Esophagus muscularis mucosa (tissue), 4 donors: ENCODE measurements at regions of chr9 and their contacts with region 1.

Region 1: GRCh38 chr9:87324613-87325194 is 173.0 kb upstream of the DAPK1 start:
- DNase-seq: peak; percentile 2
- H3K4me3 ChIP-seq: no peak overlapping the region
- H3K27ac ChIP-seq: no peak overlapping the region
- H3K4me1 ChIP-seq: peaks cover 0 to 5% (median 0%) of the 10 kb centered on the region in 4 donors
- H3K27me3 ChIP-seq: no peaks in the 10 kb centered on the region
- CTCF ChIP-seq: peak; percentile 79 to 85 (median 82)
- EP300 ChIP-seq: no peak
- POLR2A ChIP-seq: no peak

Region 2: DNA sequence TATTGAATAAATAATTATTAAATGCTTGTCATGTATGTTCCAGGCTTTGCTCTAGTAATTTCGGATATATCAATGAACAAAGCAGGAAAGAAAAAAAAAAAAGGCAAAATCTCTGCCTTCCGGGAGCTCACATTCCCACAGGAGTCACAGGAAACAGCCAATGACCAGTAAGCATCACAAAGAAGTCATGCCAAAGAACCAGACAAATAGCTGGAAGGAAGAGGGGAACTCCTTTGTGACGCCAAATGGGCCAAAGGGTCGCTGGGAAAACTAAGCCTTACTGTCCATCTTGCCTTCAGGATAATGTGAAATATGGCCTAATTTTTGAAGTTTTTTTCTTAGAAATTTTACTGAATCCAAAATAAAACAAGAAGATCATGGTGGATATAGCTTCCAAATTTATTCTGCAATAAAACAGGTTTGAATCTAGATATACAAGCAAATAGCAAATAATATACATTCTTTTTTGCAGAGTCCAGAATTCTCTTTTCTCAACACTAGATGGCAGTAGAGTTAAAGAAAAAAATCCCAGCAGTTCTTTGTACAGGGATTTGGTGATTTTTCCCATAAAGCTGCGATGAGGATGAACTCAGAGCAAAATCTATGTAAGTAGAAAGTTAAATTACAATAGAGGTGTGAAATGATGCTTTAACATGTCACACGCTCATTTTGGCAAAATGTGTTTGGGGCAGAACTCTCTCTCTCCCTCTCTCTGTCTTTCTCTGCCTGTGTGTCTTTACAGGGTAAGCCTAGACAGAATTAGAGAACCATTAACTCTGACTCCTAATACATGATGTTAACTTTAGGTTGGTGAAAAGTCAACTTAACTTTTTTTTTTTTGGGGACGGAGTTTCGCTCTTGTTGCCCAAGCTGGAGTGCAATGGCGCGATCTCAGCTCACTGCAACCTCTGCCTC is 910.5 kb before region 1 on chr9:
- intact Hi-C with region 1: loop called (anchors 5 kb)
- DNase-seq: no peak
- H3K4me3 ChIP-seq: no peak overlapping the region
- H3K27ac ChIP-seq: no peak overlapping the region
- H3K4me1 ChIP-seq: peaks cover 3 to 8% (median 7%) of the 10 kb centered on the region in 4 donors
- H3K27me3 ChIP-seq: no peaks in the 10 kb centered on the region
- CTCF ChIP-seq: peak; percentile 68 to 76 (median 75)
- EP300 ChIP-seq: no peak
- POLR2A ChIP-seq: no peak

Region 3: GRCh38 chr9:86434039-86434726 is 890.5 kb before region 1 on chr9:
- intact Hi-C with region 1: loop called (anchors 2 kb)
- DNase-seq: no peak
- H3K4me3 ChIP-seq: no peak overlapping the region
- H3K27ac ChIP-seq: peak overlapping the region; percentile 20 to 36 (median 26)
- H3K4me1 ChIP-seq: peaks cover 0 to 6% (median 2%) of the 10 kb centered on the region in 4 donors
- H3K27me3 ChIP-seq: no peaks in the 10 kb centered on the region
- CTCF ChIP-seq: peak; percentile 70 to 83 (median 71)
- EP300 ChIP-seq: no peak
- POLR2A ChIP-seq: no peak

Region 4: DNA sequence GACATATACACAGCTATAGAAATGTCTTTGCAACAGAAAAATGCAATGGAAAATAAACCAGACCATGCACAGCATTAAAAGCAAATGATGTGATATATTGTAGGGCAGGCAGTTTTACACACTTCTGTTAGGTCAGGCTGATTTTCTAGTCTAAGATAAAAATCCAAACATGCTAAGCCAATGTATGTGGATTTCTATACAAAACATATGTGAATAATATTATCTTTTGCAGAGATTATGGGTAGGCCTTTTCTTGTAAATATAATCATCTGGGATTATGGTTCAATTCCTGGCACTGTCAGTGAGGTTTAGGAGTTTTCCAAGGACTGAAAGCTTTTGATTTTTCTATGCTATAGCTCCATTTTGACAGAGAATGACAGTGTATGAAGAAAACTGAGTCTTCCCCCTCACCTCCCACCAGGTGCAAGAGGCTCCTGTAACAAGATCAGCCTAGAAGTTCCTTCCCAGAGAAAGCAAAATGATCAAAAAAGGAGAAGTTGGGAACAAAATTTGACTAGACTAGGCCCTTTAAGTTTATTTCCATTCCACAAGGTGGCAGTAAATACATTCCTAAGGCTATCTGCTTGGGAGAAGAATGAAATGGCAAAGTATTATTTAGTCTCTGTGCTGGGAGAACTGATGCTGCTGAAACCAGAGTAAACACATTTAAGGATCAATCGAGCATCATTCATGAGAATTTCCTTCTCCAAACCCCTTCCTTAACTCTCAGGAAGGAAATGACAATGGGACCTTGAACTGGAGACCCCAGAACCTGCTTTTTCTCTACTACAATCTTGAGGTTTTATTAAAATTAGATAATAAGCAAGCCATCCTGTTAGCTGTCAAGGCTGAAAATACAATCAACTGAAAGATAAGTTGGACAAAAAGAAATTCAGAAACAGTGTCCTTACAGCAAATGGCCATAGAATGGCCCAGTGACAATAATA is 837.5 kb before region 1 on chr9:
- intact Hi-C with region 1: loop called (anchors 2 kb)
- DNase-seq: no peak
- H3K4me3 ChIP-seq: no peak overlapping the region
- H3K27ac ChIP-seq: no peak overlapping the region
- H3K4me1 ChIP-seq: peaks cover 0 to 7% (median 0%) of the 10 kb centered on the region in 4 donors
- H3K27me3 ChIP-seq: no peaks in the 10 kb centered on the region
- CTCF ChIP-seq: peak; percentile 61 to 70 (median 61)
- EP300 ChIP-seq: no peak
- POLR2A ChIP-seq: no peak

Region 5: DNA sequence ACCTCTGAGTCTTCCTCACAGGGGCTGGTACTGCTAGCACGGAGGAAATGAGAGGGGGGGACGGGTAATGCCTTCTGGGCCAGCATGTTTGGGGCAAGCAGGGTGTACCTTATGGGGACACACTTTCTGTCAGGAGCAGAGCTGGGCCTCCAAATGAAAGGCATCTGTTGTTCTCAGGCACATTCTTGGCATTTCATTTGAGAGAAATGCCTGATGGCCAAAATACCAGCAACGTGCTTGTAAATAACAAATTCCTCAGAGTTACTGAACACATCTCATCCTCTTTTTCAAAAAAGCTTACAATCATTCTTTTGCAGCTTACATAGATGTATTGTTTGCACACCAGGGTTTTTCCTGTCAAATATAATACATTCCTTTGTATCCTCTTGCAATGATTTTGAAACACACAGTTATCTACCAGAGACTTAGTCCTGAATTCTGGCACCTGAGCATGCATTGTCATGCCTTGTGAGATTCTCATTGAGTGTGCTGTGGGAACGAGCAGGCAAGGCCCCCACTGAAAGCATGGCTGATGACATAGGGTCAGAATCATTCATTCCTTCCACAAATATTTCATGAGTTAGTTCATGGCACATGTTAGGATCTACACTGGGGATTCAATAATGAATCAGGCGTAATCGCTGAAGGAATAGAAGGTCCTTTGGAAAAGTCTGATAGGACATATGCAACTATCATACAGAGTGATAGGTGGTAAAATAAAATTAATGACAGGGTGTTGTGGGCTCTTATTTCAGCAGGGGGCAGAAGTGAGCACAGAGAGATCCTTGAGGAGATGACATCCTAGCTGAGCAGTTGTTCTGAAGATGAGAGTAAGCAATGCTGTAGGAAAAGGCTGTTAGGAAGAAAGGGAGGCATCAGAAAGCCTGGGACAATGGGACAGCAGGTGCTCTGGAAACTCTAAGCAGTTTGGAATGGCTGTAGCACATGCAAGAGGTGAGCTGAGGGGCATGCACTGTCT is 709.5 kb before region 1 on chr9:
- intact Hi-C with region 1: loop called (anchors 5 kb)
- DNase-seq: no peak
- H3K4me3 ChIP-seq: no peak overlapping the region
- H3K27ac ChIP-seq: no peak overlapping the region
- H3K4me1 ChIP-seq: peaks cover 0 to 14% (median 12%) of the 10 kb centered on the region in 4 donors
- H3K27me3 ChIP-seq: no peaks in the 10 kb centered on the region
- CTCF ChIP-seq: peak; percentile 37 to 48 (median 39)
- EP300 ChIP-seq: no peak
- POLR2A ChIP-seq: no peak

Region 6: GRCh38 chr9:86948074-86948929 is 376.4 kb before region 1 on chr9:
- intact Hi-C with region 1: loop called (anchors 2 kb)
- DNase-seq: peak; percentile 94
- H3K4me3 ChIP-seq: peak overlapping the region; percentile 80 to 91 (median 90)
- H3K27ac ChIP-seq: peak overlapping the region; percentile 89 to 96 (median 94)
- H3K4me1 ChIP-seq: peaks cover 19 to 38% (median 35%) of the 10 kb centered on the region in 4 donors
- H3K27me3 ChIP-seq: no peaks in the 10 kb centered on the region
- CTCF ChIP-seq: peak; percentile 74 to 97 (median 85)
- EP300 ChIP-seq: no peak
- POLR2A ChIP-seq: no peak